MCF 10A (cell line): ENCODE measurements at regions of chr4 and their contacts with region 1.

Region 1: GRCh38 chr4:29081234-29081955 is 1638.8 kb upstream of the PCDH7 start:
- DNase-seq: peak; percentile 30
- H3K4me3 Mint-ChIP-seq: no peak overlapping the region
- H3K27ac Mint-ChIP-seq: no peak overlapping the region
- H3K4me1 Mint-ChIP-seq: no peaks in the 10 kb centered on the region
- H3K27me3 Mint-ChIP-seq: no peaks in the 10 kb centered on the region
- CTCF ChIP-seq: peak; percentile 46

Region 2: GRCh38 chr4:28225050-28225449 is 856.3 kb before region 1 on chr4:
- CTCF ChIA-PET with region 1: no interaction called
- POLR2A ChIA-PET with region 1: no interaction called
- intact Hi-C with region 1: loop called (anchors 5 kb)
- DNase-seq: peak; percentile 54
- H3K4me3 Mint-ChIP-seq: no peak overlapping the region
- H3K27ac Mint-ChIP-seq: no peak overlapping the region
- H3K4me1 Mint-ChIP-seq: no peaks in the 10 kb centered on the region
- H3K27me3 Mint-ChIP-seq: no peaks in the 10 kb centered on the region
- CTCF ChIP-seq: peak; percentile 49

Region 3: DNA sequence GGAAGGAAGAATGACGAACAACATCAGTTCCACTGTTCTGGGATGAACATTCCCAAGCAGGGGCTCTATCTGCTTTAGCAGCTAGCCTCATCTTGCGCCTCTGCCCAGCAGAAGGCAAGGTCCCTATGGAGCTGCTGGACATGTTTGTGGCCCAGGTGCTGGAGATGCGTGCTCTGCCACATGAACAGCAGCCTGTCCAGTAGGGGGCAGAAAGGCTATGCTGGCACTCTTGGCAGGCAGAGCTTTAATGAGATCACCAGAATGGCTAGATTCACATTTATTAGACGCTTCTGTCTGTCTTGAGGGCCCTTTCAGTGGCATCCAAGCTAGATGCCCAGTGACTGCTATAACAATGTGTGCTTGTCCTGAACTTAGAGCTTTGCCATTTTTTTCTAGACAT is 394.8 kb before region 1 on chr4:
- CTCF ChIA-PET with region 1: no interaction called
- POLR2A ChIA-PET with region 1: no interaction called
- intact Hi-C with region 1: no loop called
- DNase-seq: peak; percentile 39
- H3K4me3 Mint-ChIP-seq: no peak overlapping the region
- H3K27ac Mint-ChIP-seq: no peak overlapping the region
- H3K4me1 Mint-ChIP-seq: no peaks in the 10 kb centered on the region
- H3K27me3 Mint-ChIP-seq: no peaks in the 10 kb centered on the region
- CTCF ChIP-seq: peak; percentile 31

Region 4: GRCh38 chr4:29175291-29175690 is 93.9 kb after region 1 on chr4:
- CTCF ChIA-PET with region 1: no interaction called
- POLR2A ChIA-PET with region 1: no interaction called
- intact Hi-C with region 1: no loop called
- DNase-seq: no peak
- H3K4me3 Mint-ChIP-seq: no peak overlapping the region
- H3K27ac Mint-ChIP-seq: no peak overlapping the region
- H3K4me1 Mint-ChIP-seq: no peaks in the 10 kb centered on the region
- H3K27me3 Mint-ChIP-seq: no peaks in the 10 kb centered on the region
- CTCF ChIP-seq: no peak

Region 5: GRCh38 chr4:29336861-29337260 is 255.5 kb after region 1 on chr4:
- CTCF ChIA-PET with region 1: no interaction called
- POLR2A ChIA-PET with region 1: no interaction called
- intact Hi-C with region 1: no loop called
- DNase-seq: no peak
- H3K4me3 Mint-ChIP-seq: no peak overlapping the region
- H3K27ac Mint-ChIP-seq: no peak overlapping the region
- H3K4me1 Mint-ChIP-seq: no peaks in the 10 kb centered on the region
- H3K27me3 Mint-ChIP-seq: no peaks in the 10 kb centered on the region
- CTCF ChIP-seq: no peak

Region 6: DNA sequence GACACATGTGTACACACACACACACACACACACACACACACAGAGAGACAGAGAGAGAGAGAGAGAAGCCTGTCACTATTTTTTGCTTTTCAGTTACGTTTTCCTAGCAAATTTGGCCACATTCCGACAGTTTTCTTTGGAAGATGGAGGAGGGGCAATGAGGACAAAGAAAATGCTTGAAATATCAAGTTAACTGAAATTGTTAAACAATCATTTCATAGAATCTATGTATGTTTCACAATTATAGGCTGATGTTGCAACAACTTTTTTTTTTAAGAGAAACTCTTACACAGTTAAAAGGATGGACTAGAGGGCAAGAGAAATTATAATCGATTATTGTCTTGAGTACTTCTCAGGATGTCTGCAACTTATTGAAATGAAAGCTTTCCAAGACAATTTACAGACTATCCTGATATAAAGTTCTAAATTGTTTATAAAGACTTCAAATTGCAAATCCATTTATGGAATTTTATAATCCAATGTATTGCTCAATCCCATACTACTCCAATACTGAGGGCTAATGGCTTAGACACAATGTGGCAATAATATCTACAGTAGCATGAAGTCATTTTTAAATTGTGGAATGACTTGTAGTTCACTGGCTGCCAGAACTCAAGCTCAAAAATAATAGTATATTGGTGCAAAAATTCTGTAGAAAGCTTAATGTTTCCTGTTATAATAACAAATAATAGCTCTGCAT is 991.8 kb after region 1 on chr4:
- CTCF ChIA-PET with region 1: no interaction called
- POLR2A ChIA-PET with region 1: no interaction called
- intact Hi-C with region 1: loop called (anchors 5 kb)
- DNase-seq: peak; percentile 43
- H3K4me3 Mint-ChIP-seq: no peak overlapping the region
- H3K27ac Mint-ChIP-seq: no peak overlapping the region
- H3K4me1 Mint-ChIP-seq: peaks cover 8% of the 10 kb centered on the region
- H3K27me3 Mint-ChIP-seq: no peaks in the 10 kb centered on the region
- CTCF ChIP-seq: no peak